Activated T-helper 1 cell treated with anti-CD3 and anti-CD28 coated beads, Interleukin-12 subunit alpha, Interleukin-12 subunit beta, Interleukin-2, Interleukin-4 antibody, amounts not matched to agents 30 ng/mL and 10 ng/mL and 1 ng/mL, durations not matched to agents 14 hours and 24 hours and 36 hours (primary cell): ENCODE measurements at regions of chr22 and their contacts with region 1.

Region 1: GRCh38 chr22:36699915-36700314 is 3.6 kb downstream of the CACNG2 start:
- DNase-seq: no peak
- H3K4me3 Mint-ChIP-seq: no peak overlapping the region
- H3K27ac Mint-ChIP-seq: no peak overlapping the region
- H3K4me1 Mint-ChIP-seq: peaks cover 6% of the 10 kb centered on the region
- H3K27me3 Mint-ChIP-seq: peaks cover 38% of the 10 kb centered on the region

Region 2: GRCh38 chr22:36644333-36644757 is 55.6 kb before region 1 on chr22:
- intact Hi-C with region 1: loop called (anchors 5 kb)
- DNase-seq: no peak
- H3K4me3 Mint-ChIP-seq: no peak overlapping the region
- H3K27ac Mint-ChIP-seq: no peak overlapping the region
- H3K4me1 Mint-ChIP-seq: no peaks in the 10 kb centered on the region
- H3K27me3 Mint-ChIP-seq: peaks cover 12% of the 10 kb centered on the region

Region 3: DNA sequence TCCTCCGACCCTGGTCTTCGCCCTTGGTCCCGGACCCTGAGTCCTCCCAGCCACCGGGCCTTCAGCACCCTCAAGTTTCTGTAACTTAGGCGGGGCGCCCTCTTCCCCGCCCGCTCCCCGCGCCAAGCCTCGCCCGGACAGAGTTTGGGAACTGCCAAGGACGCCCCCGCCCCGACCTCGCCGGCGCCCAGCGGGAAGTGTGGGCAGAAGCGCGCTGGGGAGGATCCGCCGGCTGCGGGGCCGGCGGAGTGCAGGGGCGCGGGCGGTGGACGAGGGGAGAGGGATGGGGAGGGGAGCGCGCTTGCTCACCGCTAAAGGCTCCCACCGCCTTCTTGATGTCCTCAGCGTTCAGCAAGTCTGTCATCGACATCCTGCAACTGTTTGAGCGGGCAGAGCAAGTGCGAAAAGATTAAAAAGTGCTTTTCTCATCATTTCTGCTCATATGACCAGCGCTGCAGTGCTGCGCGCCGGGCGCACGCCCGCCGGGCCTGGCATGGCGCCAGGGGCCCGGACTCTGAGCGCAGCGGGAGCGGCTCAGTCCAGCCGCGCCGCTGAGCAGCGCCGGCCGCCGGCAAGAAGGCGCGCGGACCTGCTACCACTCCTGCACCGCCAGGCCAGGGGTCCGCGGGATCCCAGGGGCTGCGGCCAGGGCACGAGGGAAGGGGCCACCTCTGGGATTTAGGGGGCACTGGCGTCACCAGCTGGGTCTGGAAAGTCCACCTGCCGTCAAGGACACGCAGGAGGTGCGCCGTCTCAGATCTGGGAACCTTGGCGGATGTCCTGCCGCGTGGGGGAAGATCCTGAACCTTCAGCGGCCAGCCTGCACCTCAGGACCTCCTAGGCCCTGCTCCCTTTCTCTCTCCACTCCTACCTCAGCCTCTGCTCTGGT is 117.0 kb after region 1 on chr22 and contains the start of gene PVALB:
- intact Hi-C with region 1: no loop called
- DNase-seq: no peak
- H3K4me3 Mint-ChIP-seq: peak within 1 kb of the TSS; percentile 26
- H3K27ac Mint-ChIP-seq: no peak within 1 kb of the TSS
- H3K4me1 Mint-ChIP-seq: no peaks in the 10 kb centered on the region
- H3K27me3 Mint-ChIP-seq: peaks cover 45% of the 10 kb centered on the region
- total RNA-seq, gene PVALB: not detected in 2 replicates